HEK293 (cell line): ENCODE measurements at regions of chr13 and their contacts with region 1.

Region 1: DNA sequence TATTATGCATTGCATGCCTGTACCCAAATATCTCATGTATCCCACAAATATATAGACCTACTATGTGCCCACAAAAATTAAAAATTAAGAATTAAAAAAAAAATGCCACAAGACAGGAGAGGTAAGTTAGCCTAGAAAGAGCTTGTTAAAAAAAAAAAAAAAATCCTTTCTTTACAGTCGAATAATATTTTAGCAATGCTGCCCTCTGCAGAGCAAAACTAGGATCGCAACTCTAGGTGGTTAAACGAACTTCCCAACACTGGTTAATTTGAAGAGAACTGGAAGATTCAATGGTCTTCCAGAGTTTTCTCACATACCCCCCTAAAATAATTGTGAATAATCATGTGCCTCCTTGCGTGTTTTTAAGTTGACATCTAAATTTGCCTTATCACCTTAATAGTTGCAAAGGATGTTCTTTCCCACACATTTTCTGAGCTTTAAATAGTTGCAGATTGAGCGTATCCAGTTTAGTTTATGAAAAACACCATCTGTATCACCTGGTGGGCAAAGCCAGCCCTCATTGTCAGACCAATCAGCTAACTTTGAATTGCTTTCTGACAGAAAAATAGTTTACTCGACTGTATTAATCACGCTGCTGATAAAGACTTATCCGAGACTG is 47.4 kb upstream of the RCBTB2 start:
- H3K4me3 ChIP-seq: no peak overlapping the region
- H3K27ac ChIP-seq: no peak overlapping the region
- H3K4me1 ChIP-seq: no peaks in the 10 kb centered on the region
- CTCF ChIP-seq: no peak

Region 2: DNA sequence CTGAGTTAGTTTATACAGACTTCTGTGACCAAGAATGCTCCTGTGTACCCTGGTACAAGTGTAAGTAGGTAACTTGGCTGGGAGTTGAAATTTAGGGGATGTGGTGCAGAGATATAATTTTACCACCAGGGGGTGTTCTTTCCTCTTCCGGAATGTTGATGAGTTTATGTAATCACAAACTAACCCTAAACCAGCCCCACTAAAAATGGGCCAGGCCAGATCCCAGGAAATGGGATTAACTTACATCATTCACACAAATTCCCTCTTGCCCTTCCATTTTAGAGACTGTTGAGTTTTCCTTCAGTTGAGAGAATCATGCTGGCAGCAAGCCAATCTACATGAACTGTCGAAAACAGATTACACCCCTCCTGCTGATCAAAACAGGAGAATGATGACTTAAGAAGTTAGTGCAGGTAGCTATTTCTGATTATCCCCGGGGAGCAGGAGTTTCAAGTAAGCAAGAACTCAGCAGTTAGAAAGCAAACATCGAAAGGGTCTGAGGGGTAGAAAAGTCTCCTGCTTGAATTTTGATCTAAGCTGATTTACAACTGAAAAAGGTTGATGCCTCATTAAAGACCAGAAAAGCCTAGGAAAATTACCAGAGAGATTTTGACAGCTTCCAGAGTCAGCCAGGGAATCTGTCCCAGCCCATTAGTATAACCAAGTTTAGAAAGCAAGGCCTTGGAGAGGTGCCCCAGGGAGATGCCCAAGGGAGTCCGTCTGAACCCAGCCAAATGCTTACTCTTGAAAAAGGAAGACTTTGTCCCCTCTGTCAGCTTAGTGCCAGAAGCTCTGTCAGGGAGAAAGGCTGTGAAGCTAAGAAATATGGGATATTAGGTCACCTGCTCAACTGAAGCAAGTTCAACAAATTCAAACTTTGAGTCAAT is 453.1 kb before region 1 on chr13:
- CTCF ChIA-PET with region 1: interaction called, 16 read pairs
- POLR2A ChIA-PET with region 1: no interaction called
- H3K4me3 ChIP-seq: no peak overlapping the region
- H3K27ac ChIP-seq: no peak overlapping the region
- H3K4me1 ChIP-seq: no peaks in the 10 kb centered on the region
- CTCF ChIP-seq: no peak

Region 3: DNA sequence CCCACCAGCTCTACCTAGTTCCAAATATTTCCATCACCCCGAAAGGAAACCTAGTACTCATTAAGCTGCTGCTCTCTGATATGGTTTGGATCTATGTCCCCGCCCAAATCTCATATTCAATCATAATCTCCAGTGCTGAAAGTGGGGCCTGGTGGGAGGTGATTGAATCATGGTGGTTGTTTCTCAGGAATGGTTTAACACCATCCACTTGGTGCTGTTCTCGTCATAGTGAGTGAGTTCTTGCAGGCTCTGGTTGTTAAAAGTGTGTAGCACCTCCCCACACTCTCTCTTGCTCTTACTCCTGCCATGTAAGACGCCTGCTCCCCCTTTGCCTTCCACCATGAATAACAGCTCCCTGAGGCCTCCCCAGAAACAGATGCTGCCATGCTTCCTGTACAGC is 442.0 kb before region 1 on chr13:
- CTCF ChIA-PET with region 1: no interaction called
- POLR2A ChIA-PET with region 1: no interaction called
- H3K4me3 ChIP-seq: no peak overlapping the region
- H3K27ac ChIP-seq: no peak overlapping the region
- H3K4me1 ChIP-seq: no peaks in the 10 kb centered on the region
- CTCF ChIP-seq: no peak

Region 4: GRCh38 chr13:48334534-48335127 is 245.7 kb before region 1 on chr13:
- CTCF ChIA-PET with region 1: interaction called, 30 read pairs
- POLR2A ChIA-PET with region 1: no interaction called
- H3K4me3 ChIP-seq: no peak overlapping the region
- H3K27ac ChIP-seq: no peak overlapping the region
- H3K4me1 ChIP-seq: no peaks in the 10 kb centered on the region
- CTCF ChIP-seq: no peak

Region 5: GRCh38 chr13:48492096-48492440 is 88.2 kb before region 1 on chr13:
- CTCF ChIA-PET with region 1: no interaction called
- POLR2A ChIA-PET with region 1: no interaction called
- H3K4me3 ChIP-seq: no peak overlapping the region
- H3K27ac ChIP-seq: no peak overlapping the region
- H3K4me1 ChIP-seq: peaks cover 7% of the 10 kb centered on the region
- CTCF ChIP-seq: no peak